Activated CD4-positive, alpha-beta T cell treated with anti-CD3 and anti-CD28 coated beads, Interleukin-2, amount 10 ng/mL, durations not matched to agents 7 days and 5 days (primary cell): ENCODE measurements at regions of chr17 and their contacts with region 1.

Region 1: GRCh38 chr17:2070241-2071023 is 15.5 kb downstream of the HIC1 start:
- DNase-seq: peak; percentile 76
- H3K4me3 Mint-ChIP-seq: no peak overlapping the region
- H3K27ac Mint-ChIP-seq: peak overlapping the region; percentile 74
- H3K4me1 Mint-ChIP-seq: peaks cover 65% of the 10 kb centered on the region
- H3K27me3 Mint-ChIP-seq: no peaks in the 10 kb centered on the region

Region 2: DNA sequence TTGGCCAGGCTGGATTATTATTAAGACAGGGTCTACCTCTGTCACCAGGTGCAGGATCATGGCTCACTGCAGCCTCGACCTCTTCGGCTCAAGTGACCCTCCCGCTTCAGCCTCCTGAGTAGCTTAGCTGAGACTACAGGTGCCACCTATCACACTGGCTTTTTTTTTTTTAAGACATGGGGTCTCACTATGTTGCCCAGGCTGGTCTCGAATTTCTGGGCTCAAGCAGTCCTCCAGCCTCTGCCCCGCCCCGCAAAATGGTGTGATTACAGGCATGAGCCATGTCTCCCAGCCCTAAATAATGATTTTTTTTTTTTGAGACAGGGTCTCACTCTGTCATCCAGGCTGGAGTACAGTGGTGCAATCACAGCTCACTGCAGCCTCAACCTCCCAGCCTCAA is 22.8 kb before region 1 on chr17:
- CTCF ChIA-PET with region 1: no interaction called
- POLR2A ChIA-PET with region 1: no interaction called
- DNase-seq: no peak
- H3K4me3 Mint-ChIP-seq: no peak overlapping the region
- H3K27ac Mint-ChIP-seq: no peak overlapping the region
- H3K4me1 Mint-ChIP-seq: peaks cover 27% of the 10 kb centered on the region
- H3K27me3 Mint-ChIP-seq: peaks cover 13% of the 10 kb centered on the region

Region 3: GRCh38 chr17:2090804-2091534 is 20.5 kb after region 1 on chr17:
- CTCF ChIA-PET with region 1: interaction called, 14 read pairs
- POLR2A ChIA-PET with region 1: interaction called, 5 read pairs
- DNase-seq: no peak
- H3K4me3 Mint-ChIP-seq: peak overlapping the region; percentile 84
- H3K27ac Mint-ChIP-seq: peak overlapping the region; percentile 94
- H3K4me1 Mint-ChIP-seq: peaks cover 72% of the 10 kb centered on the region
- H3K27me3 Mint-ChIP-seq: no peaks in the 10 kb centered on the region

Region 4: DNA sequence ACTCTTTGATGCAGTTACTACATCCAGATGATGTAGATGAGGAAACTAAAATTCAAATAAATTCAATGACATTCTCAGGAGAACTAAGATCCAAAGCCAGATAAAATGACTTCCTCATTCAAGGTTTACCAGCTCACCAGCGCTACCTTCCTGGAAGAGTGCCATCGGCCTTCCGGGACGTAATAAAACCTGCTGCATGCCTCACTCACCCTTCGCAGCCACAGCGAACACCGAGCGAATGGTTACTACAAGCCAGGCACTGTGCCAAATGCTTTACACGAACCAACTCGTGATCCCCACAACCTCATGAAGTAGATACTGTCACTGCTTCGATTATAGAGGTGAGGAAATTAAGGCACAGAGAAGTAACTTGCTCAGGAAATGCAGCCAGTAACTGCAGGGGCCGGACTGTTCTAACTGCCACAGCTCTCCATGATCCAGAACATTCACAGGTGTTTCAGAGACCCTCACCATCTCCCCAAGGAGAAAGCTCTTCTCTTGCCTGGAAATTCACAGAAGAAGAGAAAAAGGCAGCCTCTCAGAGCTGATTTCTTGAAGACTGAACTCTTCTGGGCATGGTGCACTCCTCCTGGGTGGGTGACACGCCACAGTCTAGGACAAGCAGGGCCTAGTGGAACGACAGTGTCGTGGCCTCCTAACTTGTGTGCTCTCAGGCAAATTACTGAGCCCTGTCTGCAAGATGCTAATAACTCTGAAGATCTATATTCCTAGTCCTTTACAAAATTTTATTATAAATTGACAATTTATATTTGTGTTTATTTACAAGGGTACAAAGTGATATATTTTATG is 31.2 kb after region 1 on chr17:
- CTCF ChIA-PET with region 1: interaction called, 10 read pairs
- POLR2A ChIA-PET with region 1: no interaction called
- DNase-seq: peak; percentile 62
- H3K4me3 Mint-ChIP-seq: peak overlapping the region; percentile 10
- H3K27ac Mint-ChIP-seq: peak overlapping the region; percentile 80
- H3K4me1 Mint-ChIP-seq: peaks cover 59% of the 10 kb centered on the region
- H3K27me3 Mint-ChIP-seq: no peaks in the 10 kb centered on the region